Mammary epithelial cell (primary cell): ENCODE measurements at regions of chr9 and their contacts with region 1.

Region 1: DNA sequence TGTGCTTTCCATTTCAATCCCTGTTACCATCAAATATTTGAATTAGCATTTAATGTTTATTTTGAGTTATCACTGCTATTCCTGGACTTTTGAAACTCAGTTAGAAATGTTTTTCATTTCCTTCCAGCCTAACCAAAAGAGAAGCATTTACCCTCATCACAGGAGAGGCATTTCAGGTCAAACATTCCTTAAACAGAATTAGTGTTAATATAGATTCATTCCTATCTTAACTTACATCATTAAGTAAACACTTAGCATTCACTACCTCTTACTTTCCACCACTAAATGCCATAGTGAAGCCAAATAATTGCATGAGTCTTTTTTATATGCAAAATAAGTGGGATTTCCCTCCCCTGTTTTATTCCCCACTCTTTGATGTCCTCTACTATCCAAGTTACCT is 136.5 kb upstream of the OR13F1 start:
- DNase-seq: no peak
- H3K4me3 ChIP-seq: no peak overlapping the region
- H3K27ac ChIP-seq: no peak overlapping the region
- H3K4me1 ChIP-seq: no peaks in the 10 kb centered on the region
- H3K27me3 ChIP-seq: no peaks in the 10 kb centered on the region
- CTCF ChIP-seq: no peak

Region 2: DNA sequence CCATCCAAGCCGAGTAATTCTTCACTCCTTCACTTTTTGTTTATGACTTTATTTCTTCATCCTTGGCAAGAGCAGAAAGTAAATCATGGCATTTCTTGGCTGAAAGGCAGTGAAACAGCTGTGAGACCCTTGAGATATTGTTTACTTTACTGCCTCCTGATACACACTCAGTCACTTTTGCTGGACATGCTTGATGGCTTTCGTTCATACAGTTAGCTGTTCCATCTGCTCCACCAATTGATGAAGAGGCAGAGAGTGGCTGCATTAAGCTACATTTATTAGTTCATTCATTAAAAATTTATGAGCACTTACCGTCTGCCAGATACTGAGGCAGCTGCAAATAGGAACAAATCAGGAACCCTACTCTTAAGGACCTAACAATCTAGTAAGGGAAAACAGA is 47.8 kb before region 1 on chr9:
- CTCF ChIA-PET with region 1: no interaction called
- dilution Hi-C with region 1: no loop called
- in situ Hi-C with region 1: no loop called
- intact Hi-C with region 1: no loop called
- DNase-seq: no peak
- H3K4me3 ChIP-seq: no peak overlapping the region
- H3K27ac ChIP-seq: no peak overlapping the region
- H3K4me1 ChIP-seq: no peaks in the 10 kb centered on the region
- H3K27me3 ChIP-seq: no peaks in the 10 kb centered on the region
- CTCF ChIP-seq: no peak

Region 3: GRCh38 chr9:104412238-104412637 is 44.7 kb after region 1 on chr9:
- CTCF ChIA-PET with region 1: no interaction called
- dilution Hi-C with region 1: no loop called
- in situ Hi-C with region 1: no loop called
- intact Hi-C with region 1: loop called (anchors 2 kb)
- DNase-seq: peak; percentile 6
- H3K4me3 ChIP-seq: no peak overlapping the region
- H3K27ac ChIP-seq: no peak overlapping the region
- H3K4me1 ChIP-seq: no peaks in the 10 kb centered on the region
- H3K27me3 ChIP-seq: no peaks in the 10 kb centered on the region
- CTCF ChIP-seq: no peak